ENCODE measurements at regions of chrX and their contacts with region 1.

Region 1: DNA sequence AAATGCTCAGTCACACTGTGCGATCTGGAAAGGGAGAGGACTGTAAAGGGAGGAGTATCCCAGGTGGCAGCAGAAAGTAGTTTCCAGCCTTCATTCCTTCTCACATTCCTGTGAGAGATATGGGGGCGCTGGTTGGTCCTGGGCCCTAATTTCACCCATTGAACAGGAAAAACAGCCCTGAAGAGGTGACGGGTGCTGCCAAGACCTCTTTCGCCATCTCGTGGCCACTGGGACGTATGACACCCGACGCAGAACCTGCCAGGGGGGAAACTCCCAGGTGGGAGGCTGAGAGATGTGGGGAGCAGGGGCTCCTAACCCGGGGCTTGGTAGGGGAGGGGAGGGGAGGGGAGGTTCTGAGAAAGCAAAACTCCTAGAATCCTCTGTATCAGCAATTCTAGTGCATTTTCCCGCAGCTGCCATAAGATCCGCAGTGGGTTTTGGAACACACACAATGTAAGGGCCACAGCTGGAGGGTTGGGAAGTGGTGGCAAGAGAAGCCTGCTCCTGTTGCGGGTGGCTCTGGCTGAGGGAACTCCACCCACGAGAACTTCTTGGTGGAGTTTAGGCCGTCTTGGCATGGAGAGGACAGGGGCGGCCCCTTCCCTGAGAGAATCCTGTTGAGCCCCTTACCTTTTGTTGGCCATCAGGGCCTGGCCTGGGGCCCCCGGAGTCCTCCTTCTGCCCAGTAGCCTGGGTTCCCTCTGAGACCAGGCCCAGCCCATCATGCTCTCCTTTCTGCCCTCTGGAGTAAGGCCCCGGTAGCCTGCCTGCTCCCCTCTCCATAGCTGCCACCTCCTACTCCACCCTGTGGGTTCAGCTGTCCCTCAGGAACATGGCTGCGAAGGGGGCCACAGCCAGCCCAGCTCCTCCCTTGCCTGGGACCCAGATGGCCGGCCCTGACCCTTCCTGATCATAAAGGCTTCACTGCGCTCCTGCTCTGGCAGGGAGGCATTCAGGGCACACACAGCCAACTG is 134.1 kb downstream of the OR13H1 start:
- DNase-seq: peak; percentile 31
- H3K4me3 ChIP-seq: no peak overlapping the region
- H3K27ac ChIP-seq: no peak overlapping the region
- H3K4me1 ChIP-seq: no peaks in the 10 kb centered on the region
- H3K27me3 ChIP-seq: no peaks in the 10 kb centered on the region
- CTCF ChIP-seq: peak in 4 of 5 experiments; percentile 24 to 71 (median 40)
- EP300 ChIP-seq: no peak
- POLR2A ChIP-seq: no peak

Region 2: GRCh38 chrX:131841496-131842410 is 163.8 kb after region 1 on chrX:
- in situ Hi-C with region 1: loop called in 1 of 4 experiments (anchors 5 kb)
- intact Hi-C with region 1: no loop called
- DNase-seq: peak; percentile 17
- H3K4me3 ChIP-seq: no peak overlapping the region
- H3K27ac ChIP-seq: no peak overlapping the region
- H3K4me1 ChIP-seq: no peaks in the 10 kb centered on the region
- H3K27me3 ChIP-seq: no peaks in the 10 kb centered on the region
- CTCF ChIP-seq: peak; percentile 61 to 90 (median 69)
- EP300 ChIP-seq: no peak
- POLR2A ChIP-seq: no peak